ENCODE measurements at regions of chr11 and their contacts with region 1.

Region 1: DNA sequence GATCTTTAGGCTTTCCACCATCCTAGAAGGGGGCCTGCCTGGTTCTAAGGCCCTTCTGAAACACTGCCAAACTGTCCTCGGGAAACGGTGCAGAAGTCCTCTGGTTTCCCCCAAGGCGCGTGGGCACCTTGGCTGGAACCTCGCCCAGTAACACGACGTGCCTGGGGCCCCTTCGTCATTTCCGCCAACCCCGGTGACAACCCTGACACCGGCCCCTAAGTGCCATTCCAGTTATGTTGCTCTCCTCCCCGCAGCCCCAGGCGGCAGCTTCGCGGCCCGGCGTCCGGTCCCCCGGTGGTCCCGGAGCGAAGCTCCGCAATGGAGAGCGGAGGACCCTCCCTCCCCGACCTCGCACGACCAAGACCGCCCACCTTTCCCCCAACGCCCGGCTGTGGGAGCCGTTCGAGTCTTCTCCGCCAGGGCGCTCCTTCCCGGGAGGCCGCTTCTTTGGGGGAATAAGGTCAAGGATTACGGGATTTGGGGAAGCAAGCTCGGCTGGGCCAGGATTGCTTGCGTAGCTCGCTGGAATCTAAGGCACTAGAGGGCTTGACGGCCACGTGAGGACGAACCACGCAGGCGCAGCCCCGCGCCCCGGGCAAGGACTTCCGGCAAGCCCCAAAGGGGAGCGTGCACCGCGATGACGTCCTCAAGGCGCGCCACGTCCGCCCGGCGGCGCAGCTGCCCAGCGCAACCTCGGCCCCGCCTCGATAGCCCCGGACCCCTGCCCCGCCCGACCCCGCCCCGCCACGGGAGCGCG is 626 bp downstream of the RNH1 start:
- DNase-seq: peak; percentile 98 to 99 (median 98)
- H3K4me3 ChIP-seq: peak overlapping the region; percentile 52 to 92 (median 80)
- H3K27ac ChIP-seq: peak overlapping the region; percentile 98 to 100 (median 100)
- H3K4me1 ChIP-seq: peaks cover 27 to 43% of the 10 kb centered on the region in 2 donors
- H3K27me3 ChIP-seq: no peaks in the 10 kb centered on the region
- CTCF ChIP-seq: peak in 3 of 6 experiments; percentile 18 to 35 (median 31)
- POLR2A ChIP-seq: peak; percentile 75 to 90

Region 2: GRCh38 chr11:447923-448731 is 58.3 kb before region 1 on chr11:
- intact Hi-C with region 1: loop called (anchors 5 to 10 kb)
- DNase-seq: peak; percentile 93 to 98 (median 96)
- H3K4me3 ChIP-seq: peak overlapping the region in 3 of 4 donors; percentile 27 to 59 (median 39)
- H3K27ac ChIP-seq: peak overlapping the region; percentile 65 to 94 (median 92)
- H3K4me1 ChIP-seq: peaks cover 17 to 25% of the 10 kb centered on the region in 2 donors
- H3K27me3 ChIP-seq: no peaks in the 10 kb centered on the region
- CTCF ChIP-seq: peak; percentile 52 to 92 (median 83)
- POLR2A ChIP-seq: peak; percentile 74 to 77

Measured in adrenal gland (tissue), 19 donors.